ENCODE measurements at regions of chr13 and their contacts with region 1.

Region 1: GRCh38 chr13:86438034-86438433 is 638.8 kb upstream of the SLITRK6 start:
- DNase-seq: no peak
- ATAC-seq: no peak
- H3K4me3 ChIP-seq: no peak overlapping the region
- H3K27ac ChIP-seq: no peak overlapping the region
- H3K4me1 ChIP-seq: no peaks in the 10 kb centered on the region
- H3K27me3 ChIP-seq: no peaks in the 10 kb centered on the region
- CTCF ChIP-seq: no peak
- POLR2A ChIP-seq: no peak

Region 2: GRCh38 chr13:85985791-85986190 is 452.2 kb before region 1 on chr13:
- intact Hi-C with region 1: no loop called
- DNase-seq: no peak
- ATAC-seq: no peak
- H3K4me3 ChIP-seq: no peak overlapping the region
- H3K27ac ChIP-seq: no peak overlapping the region
- H3K4me1 ChIP-seq: no peaks in the 10 kb centered on the region
- H3K27me3 ChIP-seq: no peaks in the 10 kb centered on the region
- CTCF ChIP-seq: no peak
- POLR2A ChIP-seq: no peak

Region 3: DNA sequence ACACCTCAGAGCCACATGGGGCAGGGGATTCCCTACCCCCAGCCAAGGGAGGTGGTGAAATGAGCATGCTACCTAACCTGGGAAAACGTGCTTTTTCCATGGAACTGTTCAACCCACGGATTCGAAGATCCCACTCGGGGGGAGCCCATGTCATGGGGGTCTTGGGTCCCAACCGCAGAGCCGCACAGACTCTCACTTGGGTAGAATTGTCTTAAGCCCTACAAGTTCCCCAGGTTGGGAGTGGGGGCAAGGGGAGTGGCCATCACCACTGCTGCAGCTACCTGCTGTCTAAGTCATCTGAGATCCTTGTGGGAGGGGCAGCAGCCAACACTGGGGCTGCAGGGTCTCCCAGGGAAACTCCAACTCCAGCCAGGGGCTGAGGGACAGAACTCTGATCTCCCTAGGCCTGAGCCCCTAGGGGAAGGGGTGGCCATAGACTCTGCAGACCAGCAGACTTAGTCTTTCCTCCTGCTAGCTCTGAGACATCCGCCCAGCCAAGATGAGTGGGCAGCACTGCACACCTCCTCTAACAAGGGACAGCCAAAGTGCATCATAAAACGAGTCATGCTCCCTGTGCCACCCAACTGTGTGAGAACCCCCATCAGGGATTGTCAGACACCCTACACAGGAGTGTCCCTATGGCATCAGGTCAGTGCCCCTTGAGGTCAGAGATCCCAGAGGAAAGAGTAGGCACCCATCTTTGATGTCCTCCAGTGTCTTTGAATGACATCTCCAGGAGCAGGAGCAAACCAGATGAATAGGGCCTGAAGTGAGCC is 28.4 kb before region 1 on chr13:
- intact Hi-C with region 1: loop called in 1 of 10 experiments (anchors 2 kb)
- DNase-seq: peak in 1 of 5 donors; percentile 33
- ATAC-seq: no peak
- H3K4me3 ChIP-seq: no peak overlapping the region
- H3K27ac ChIP-seq: no peak overlapping the region
- H3K4me1 ChIP-seq: no peaks in the 10 kb centered on the region
- H3K27me3 ChIP-seq: no peaks in the 10 kb centered on the region
- CTCF ChIP-seq: no peak
- POLR2A ChIP-seq: no peak

Measured in heart left ventricle (tissue), 16 donors.